Lower leg skin (tissue), 4 donors: ENCODE measurements at regions of chr6 and their contacts with region 1.

Region 1: DNA sequence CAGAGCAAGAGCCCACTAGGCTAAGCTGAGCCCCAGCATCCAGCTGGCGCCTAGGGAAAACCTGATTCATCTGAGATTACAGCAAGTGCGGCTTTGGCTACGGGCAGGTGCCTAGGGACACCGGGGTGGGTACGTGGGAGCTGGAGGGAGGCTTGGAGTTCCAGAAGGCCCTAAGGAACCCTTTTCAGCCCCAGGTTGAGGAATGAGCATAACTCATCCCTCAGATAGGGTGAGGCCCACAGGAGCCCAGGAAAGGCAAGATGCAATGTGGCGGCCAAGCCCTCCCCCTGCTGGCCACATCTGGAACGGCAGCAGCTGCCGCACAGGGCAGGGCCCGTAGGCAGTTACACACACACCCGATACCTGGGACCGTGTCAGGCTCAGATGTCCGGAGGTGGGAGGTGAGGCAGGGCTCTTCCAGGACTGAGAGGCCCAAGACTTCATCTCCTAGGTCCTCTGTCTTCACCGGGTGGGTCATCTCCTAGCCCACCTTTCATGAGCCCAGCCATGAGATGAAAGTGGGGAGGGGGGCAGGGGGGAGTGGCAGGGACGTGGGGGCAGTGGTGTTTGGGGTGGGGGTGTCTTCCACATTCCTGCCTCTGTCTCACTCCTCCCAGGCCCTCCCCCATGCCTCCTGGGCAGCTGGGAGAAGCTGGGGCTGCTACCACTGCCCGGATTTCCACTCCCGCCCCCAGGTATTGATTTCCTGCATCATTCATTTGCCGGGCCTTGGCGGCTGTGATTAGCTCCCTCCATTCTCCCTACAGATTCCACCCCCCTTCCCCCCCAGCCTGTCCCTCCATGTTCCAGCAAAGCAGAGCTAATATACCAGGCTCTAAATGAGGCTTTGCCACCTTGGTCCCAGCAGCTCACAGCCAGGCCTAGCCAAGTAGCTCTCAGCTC is 5.5 kb downstream of the MDGA1 start:
- DNase-seq: peak; percentile 56 to 94
- H3K4me3 ChIP-seq: no peak overlapping the region
- CTCF ChIP-seq: peak in 1 of 3 donors; percentile 95
- POLR2A ChIP-seq: no peak

Region 2: DNA sequence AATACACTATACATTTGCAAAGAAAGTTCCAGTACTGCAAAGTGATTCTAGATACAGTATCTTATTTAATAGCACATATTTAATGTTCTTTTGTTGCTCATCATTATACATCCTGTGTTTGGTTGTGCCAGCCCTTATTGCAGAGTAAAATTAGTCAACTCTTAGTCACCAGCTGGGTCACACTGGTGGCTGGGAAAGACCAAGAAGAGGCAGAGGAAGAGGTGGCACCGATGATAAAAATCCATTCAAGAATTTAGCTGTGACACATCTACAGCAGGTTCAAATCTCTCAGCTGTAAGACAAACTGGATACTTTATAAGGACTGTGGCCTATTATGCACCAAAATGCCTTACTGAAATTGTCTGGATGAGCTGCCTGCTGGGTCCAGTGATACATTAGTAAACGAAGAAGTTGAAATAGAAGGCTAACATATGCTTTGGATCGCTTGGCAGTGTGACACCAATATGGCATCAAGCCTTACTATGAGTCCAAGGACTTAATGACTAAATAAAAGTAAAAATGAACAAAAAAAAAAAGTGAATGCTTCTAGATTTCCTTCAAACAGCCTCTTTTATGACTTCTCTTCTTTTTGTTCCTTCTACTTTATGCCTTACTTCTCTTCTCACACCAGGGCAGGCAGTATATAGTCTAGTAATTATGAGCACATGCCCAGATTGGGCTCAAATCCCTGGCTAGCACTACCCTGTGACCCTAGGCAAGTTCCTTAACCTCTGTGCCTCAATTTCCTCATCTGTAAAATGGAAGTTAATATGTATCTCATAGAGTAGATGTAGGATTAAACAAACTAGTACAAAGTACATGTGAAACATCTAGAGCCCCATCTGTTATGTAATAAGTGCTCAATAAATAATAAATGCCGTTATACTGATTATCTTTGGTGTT is 367.8 kb before region 1 on chr6:
- intact Hi-C with region 1: loop called (anchors 5 kb)
- DNase-seq: no peak
- H3K4me3 ChIP-seq: no peak overlapping the region
- CTCF ChIP-seq: no peak
- POLR2A ChIP-seq: no peak

Region 3: DNA sequence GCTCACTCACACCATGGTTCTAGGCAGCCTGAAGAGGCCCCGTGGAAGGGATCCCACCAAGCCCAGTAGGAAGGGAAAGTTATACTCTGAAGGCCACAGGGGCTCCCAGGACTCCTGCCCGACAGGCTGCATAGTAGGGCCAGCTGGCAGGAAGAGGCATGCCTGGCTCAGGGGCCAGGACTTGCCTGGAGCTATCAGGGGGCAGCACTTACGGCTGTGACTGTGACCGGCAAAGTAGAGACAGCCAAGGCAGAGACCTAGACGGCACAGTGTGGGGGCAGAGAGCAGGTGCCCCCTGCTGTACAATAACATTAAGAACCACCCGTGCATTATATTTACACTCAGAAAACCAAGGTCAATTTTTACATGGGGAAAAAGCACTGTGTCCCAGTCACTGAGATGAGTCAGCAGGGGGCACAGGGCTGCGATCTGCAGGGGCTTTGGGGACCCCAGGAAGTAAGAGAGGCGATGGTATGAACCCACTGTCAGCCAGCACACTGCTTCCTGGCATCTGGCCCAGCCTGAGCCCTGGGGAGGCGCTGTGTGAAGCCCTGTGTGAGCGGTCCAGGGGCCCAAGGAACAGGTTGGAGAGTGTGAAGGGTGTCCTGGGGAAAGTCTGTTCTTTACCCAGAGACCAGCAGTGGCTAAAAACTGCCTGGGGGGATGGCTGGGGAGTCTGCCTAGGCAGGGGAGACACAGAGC is 202.3 kb before region 1 on chr6:
- intact Hi-C with region 1: loop called (anchors 5 kb)
- DNase-seq: no peak
- H3K4me3 ChIP-seq: no peak overlapping the region
- CTCF ChIP-seq: no peak
- POLR2A ChIP-seq: no peak

Region 4: GRCh38 chr6:38493931-38494547 is 801.9 kb after region 1 on chr6:
- intact Hi-C with region 1: loop called (anchors 10 kb)
- DNase-seq: peak; percentile 85 to 95
- H3K4me3 ChIP-seq: no peak overlapping the region
- CTCF ChIP-seq: peak in 1 of 3 donors; percentile 67
- POLR2A ChIP-seq: no peak